ENCODE measurements at regions of chr7 and their contacts with region 1.

Region 1: GRCh38 chr7:105589356-105590077 is 8.2 kb upstream of the EFCAB10 start:
- DNase-seq: peak; percentile 66
- ATAC-seq: peak; percentile 94
- H3K4me3 ChIP-seq: no peak overlapping the region
- H3K27ac ChIP-seq: no peak overlapping the region
- H3K4me1 ChIP-seq: peaks cover 9% of the 10 kb centered on the region
- H3K27me3 ChIP-seq: no peaks in the 10 kb centered on the region; a peak in 1 of 5 replicates
- CTCF ChIP-seq: peak; percentile 84
- EP300 ChIP-seq: no peak
- POLR2A ChIP-seq: no peak
- RAD21 ChIP-seq: peak; percentile 66

Region 2: GRCh38 chr7:105429746-105430612 is 159.5 kb before region 1 on chr7:
- CTCF ChIA-PET with region 1: no interaction called
- POLR2A ChIA-PET with region 1: no interaction called
- in situ Hi-C with region 1: no loop called
- intact Hi-C with region 1: loop called (anchors 1 kb)
- DNase-seq: peak; percentile 50
- ATAC-seq: peak; percentile 54
- H3K4me3 ChIP-seq: no peak overlapping the region
- H3K27ac ChIP-seq: no peak overlapping the region
- H3K4me1 ChIP-seq: no peaks in the 10 kb centered on the region
- H3K27me3 ChIP-seq: no peaks in the 10 kb centered on the region
- CTCF ChIP-seq: peak; percentile 75
- EP300 ChIP-seq: no peak
- POLR2A ChIP-seq: no peak
- RAD21 ChIP-seq: peak; percentile 11; the same call in 1 of the 2 replicates